ENCODE measurements at regions of chr9 and their contacts with region 1.

Region 1: DNA sequence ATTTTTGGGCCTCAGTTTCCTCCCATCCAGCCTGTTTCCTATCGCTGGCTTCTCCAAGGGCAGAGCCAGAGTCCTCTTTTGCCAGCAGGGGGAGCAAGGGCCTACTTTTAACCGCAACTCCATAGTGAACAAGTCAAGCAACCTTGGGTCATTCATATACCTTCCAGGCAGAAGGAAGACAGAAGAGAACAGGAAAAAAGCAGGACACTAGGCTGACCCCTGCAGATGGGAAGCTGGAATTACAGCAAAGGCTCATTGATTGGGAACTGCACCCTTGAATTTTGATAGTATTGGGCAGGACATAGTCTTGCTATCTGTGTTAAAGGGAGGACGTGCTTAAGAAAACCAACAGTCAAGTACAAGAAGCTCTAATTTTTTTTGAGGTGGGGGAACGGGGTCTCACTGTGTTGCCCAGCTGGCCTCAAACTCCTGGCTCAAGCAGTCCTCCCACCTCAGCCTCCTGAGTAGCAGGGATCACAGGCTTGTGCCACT is 30.1 kb downstream of the QRFP start:
- DNase-seq: peak; percentile 86
- H3K4me3 Mint-ChIP-seq: no peak overlapping the region
- H3K27ac Mint-ChIP-seq: no peak overlapping the region
- H3K4me1 Mint-ChIP-seq: no peaks in the 10 kb centered on the region
- H3K27me3 Mint-ChIP-seq: no peaks in the 10 kb centered on the region

Region 2: DNA sequence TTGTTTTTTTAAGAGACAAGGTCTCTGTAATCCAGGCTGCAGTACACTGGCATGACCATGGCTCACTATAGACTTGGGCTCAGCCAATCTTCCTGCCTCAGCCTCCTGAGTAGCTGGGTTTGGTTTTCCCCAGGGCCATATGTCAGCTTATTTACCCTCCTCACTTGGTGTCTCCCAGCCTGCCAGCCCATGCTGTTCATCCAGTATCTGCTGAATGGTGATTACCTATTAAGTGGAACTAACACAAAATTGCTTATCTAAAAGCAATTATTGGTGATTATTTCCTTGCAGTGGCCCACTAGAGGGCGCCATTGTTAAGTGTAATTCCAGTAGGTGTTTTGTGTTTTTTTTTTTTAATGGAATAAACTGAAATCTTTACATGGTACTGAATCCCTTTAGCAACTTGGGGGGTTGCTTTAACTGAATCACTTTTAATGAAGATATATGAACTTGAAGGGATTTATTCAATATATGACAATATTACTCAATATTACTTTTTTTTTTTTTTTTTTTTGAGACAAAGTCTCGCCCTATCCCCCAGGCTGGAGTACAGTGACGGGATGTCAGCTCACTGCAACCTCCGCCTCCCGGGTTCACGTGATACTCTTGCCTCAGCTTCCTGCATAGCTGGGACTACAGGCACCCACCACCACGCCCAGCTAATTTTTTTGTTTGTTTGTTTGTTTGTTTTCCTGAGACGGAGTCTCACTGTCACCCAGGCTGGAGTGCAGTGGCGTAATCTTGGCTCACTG is 159.1 kb before region 1 on chr9:
- intact Hi-C with region 1: loop called (anchors 1 kb)
- DNase-seq: peak; percentile 89
- H3K4me3 Mint-ChIP-seq: no peak overlapping the region
- H3K27ac Mint-ChIP-seq: no peak overlapping the region
- H3K4me1 Mint-ChIP-seq: peaks cover 6% of the 10 kb centered on the region
- H3K27me3 Mint-ChIP-seq: no peaks in the 10 kb centered on the region

Region 3: DNA sequence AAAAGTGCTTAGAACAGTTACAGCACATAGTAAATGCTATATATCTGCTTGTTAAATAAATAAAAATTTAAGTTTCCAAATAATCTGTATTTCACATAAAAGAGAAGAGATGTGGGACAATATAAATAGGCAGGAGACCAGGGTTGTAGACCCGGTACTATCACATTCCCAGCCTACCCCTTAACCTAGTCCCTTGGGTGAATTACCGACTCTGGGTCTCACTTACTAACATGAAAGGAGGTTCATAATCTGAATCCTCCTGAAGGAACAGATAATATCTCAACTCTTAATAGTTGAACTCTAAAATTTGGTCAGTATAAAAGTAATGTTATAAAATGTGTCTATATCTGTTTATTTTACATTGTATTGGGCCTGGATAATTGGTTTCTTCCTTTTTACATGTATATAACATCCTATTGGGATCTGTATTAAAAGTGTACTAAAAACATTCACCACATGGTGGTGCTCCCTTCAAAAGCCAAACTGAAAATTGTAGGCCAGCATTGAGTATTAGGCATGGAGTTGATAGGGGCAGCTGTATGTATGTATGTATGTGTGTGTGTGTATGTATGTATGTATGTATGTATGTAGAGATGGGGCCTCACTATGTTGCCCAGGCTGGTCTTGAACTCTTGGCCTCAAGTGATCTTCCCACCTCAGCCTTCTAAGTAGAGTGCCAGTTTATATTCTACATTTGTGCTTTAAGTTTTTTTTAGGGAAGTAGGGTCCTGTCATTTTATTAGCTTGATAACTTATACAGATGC is 95.7 kb before region 1 on chr9:
- intact Hi-C with region 1: loop called (anchors 1 kb)
- DNase-seq: peak; percentile 63
- H3K4me3 Mint-ChIP-seq: no peak overlapping the region
- H3K27ac Mint-ChIP-seq: no peak overlapping the region
- H3K4me1 Mint-ChIP-seq: peaks cover 10% of the 10 kb centered on the region
- H3K27me3 Mint-ChIP-seq: no peaks in the 10 kb centered on the region

Region 4: DNA sequence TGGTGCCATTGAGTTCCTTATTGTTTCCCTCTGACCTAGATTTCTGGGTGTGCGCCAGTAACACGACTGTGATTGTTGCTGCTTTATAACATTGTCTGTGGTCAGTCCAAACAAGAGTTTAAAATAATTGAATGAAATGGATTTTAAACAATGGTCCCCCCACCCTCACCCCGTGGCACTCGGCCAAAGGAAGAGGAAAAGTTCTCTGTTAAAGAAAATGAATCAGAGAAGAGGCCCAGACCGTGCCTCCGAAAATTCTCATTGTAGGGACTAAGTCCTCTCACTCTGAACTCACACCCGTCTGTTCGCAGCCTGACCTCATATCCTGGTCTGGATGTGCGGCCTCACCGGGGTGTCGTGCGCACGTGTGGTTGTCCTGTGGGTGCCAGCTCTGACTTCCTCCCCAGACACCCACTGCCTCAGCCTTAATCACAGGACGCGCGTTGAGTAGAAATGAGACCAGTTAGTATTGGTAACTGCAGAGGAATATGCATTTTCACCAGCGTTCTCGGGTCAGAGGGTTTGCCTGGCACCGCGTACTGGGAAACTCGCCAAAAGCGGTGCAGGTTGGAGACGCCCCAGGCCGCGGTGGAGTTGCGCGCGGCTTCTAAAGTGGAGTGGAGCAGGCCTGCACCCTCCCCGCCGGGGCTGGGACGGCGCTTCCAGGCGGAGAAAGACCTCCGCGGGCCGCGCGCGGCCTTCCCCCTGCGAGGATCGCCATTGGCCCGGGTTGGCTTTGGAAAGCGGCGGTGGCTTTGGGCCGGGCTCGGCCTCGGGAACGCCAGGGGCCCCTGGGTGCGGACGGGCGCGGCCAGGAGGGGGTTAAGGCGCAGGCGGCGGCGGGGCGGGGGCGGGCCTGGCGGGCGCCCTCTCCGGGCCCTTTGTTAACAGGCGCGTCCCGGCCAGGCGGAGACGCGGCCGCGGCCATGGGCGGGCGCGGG is 31.9 kb before region 1 on chr9 and contains the start of gene ABL1:
- intact Hi-C with region 1: loop called (anchors 1 kb)
- DNase-seq: peak; percentile 82
- H3K4me3 Mint-ChIP-seq: peak within 1 kb of the TSS; percentile 96
- H3K27ac Mint-ChIP-seq: peak within 1 kb of the TSS; percentile 96
- H3K4me1 Mint-ChIP-seq: peaks cover 15% of the 10 kb centered on the region
- H3K27me3 Mint-ChIP-seq: peaks cover 13% of the 10 kb centered on the region
- total RNA-seq, gene ABL1: 32.6 and 35.7 TPM in 2 replicates

Region 5: GRCh38 chr9:131046581-131047202 is 180.2 kb after region 1 on chr9:
- intact Hi-C with region 1: loop called (anchors 1 kb)
- DNase-seq: peak; percentile 93
- H3K4me3 Mint-ChIP-seq: no peak overlapping the region
- H3K27ac Mint-ChIP-seq: no peak overlapping the region
- H3K4me1 Mint-ChIP-seq: no peaks in the 10 kb centered on the region
- H3K27me3 Mint-ChIP-seq: peaks cover 3% of the 10 kb centered on the region